ENCODE measurements at regions of chr12 and their contacts with region 1.

Region 1: DNA sequence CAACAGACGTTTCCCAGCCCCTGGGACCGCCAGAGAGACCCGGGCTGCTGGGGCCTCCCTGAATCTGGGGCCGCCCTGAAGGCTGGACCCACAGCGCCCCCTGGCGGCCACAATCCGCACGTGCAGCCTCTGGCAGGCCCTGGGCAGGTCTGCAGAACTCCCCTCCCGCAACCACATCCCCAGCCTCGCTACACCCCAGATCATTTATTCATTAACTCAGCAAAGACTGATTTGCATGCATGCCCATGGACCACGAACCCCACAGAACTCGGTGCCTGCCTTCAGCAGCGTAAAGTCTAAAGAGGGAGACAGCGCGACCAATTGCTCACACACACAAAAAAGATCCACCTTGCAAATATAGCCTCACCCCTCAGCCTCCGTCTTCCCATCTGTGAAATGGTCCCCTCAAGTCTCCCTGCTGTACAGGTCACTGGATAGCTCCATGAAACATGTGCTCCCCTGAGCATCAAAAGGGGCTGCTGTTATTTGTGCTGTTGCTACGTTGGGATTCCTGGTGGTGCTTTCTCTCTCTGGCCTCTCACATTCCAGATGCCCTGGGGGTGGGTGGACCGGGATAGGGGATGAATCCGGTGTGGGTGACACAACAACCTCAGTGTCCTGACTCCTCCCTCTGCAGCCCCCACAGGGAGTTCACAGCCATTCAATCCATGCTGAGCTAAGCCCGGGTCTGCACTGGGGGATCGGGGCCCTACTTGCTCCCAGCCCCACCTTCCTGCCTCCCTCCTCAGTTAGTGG is 96.4 kb downstream of the SCARB1 start:
- DNase-seq: peak; percentile 92
- CTCF ChIP-seq: peak; percentile 96

Region 2: GRCh38 chr12:124044809-124045321 is 722.4 kb before region 1 on chr12:
- in situ Hi-C with region 1: loop called (anchors 5 kb)
- DNase-seq: no peak
- CTCF ChIP-seq: no peak

Region 3: GRCh38 chr12:124388679-124389536 is 378.3 kb before region 1 on chr12:
- in situ Hi-C with region 1: loop called (anchors 25 kb)
- DNase-seq: no peak
- CTCF ChIP-seq: no peak

Region 4: DNA sequence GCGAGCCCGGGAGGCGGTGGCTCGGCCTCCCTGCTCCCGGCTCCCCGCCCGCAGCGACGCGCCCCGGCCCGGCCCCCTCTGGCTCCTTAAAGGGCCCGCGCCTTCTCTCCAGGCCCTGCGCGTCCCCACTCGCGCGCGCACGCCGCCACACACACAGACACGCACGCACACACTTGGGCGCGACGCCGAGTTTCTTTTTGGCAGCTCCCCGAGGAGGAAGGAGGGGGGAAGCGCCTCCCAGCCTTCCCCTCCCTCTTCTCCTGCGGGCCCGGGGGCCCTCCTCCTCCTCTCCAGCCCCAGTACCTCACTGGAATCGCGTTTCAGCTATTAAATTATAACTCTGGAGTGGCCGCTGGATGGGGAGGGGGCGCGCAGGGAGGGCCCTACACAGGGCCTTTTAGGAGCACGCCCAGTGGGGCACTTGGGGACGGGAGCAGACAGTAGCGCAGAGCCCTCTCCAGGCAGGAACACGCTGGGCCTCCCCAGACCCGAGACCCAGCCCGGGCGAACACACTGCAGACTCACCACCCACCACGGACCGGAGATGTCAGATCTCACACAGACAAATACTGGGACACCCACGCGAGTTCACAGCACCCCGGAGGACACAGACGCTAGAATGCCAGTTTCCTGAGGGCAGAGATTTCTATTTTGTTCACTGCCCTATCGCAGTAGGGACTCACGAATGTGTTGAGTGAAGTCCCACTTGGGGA is 199.4 kb before region 1 on chr12:
- in situ Hi-C with region 1: loop called (anchors 10 kb)
- DNase-seq: peak; percentile 96
- CTCF ChIP-seq: no peak